B cell (primary cell): ENCODE measurements at regions of chr3 and their contacts with region 1.

Region 1: DNA sequence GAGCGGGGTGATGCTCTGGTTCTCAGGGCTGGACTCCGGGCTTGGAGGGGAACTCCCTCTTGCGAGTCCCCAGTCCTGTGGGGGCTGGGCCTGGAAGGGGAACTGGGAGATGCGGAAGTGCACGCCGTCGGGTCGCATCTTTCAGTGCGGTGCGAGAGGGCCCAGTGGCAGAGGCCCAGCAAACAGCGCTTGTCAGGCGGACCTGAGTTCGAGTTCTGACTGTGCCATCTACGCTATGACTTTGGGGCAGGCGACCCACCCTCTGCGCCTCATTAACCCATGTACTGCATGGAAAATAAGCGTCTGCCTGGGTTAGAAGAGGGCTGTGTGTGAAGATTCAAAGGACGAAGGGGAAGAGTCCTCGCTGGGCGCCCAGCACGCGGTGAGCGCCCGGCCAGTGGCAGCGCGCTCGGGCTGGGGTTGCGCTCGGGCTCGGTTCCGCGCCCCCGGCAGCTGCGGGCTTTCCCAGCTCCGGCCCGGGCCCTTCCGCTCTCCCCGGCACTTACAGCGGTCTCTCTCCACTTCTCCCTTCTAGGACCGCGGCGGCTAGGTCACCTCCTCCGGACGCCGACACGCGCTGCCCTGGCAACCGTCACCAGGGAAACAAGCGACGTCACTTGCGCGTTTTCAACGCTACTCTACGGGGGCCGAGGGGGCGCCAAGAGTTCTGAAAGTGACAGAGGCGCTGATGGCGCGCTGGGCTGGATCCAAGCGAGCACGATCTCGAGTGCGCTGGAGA is at the start of gene CCDC13:
- DNase-seq: peak; percentile 98
- ATAC-seq: peak; percentile 88
- H3K4me3 ChIP-seq: peak within 1 kb of the TSS; percentile 46 to 87 (median 62)
- H3K4me3 Mint-ChIP-seq: peak within 1 kb of the TSS; percentile 90
- H3K27ac ChIP-seq: peak within 1 kb of the TSS; percentile 66 to 81
- H3K27ac Mint-ChIP-seq: peak within 1 kb of the TSS; percentile 92
- H3K4me1 ChIP-seq: peaks cover 4 to 10% of the 10 kb centered on the region in 2 donors
- H3K4me1 Mint-ChIP-seq: peaks cover 11% of the 10 kb centered on the region
- H3K27me3 ChIP-seq: no peaks in the 10 kb centered on the region
- H3K27me3 Mint-ChIP-seq: no peaks in the 10 kb centered on the region
- CTCF ChIP-seq: no peak
- total RNA-seq, gene CCDC13: 1.9 and 2.5 TPM in 2 replicates

Region 2: GRCh38 chr3:42654331-42655201 is 118.3 kb before region 1 on chr3:
- CTCF ChIA-PET with region 1: no interaction called
- POLR2A ChIA-PET with region 1: no interaction called
- intact Hi-C with region 1: loop called (anchors 1 kb)
- DNase-seq: no peak
- ATAC-seq: peak; percentile 55
- H3K4me3 ChIP-seq: peak overlapping the region in 4 of 5 experiments; percentile 28 to 56 (median 50)
- H3K4me3 Mint-ChIP-seq: peak overlapping the region; percentile 86
- H3K27ac ChIP-seq: no peak overlapping the region
- H3K27ac Mint-ChIP-seq: no peak overlapping the region
- H3K4me1 ChIP-seq: peaks cover 25 to 30% of the 10 kb centered on the region in 2 donors
- H3K4me1 Mint-ChIP-seq: peaks cover 21% of the 10 kb centered on the region
- H3K27me3 ChIP-seq: peaks cover 0 to 21% (median 1%) of the 10 kb centered on the region in 4 experiments
- H3K27me3 Mint-ChIP-seq: peaks cover 7% of the 10 kb centered on the region
- CTCF ChIP-seq: no peak

Region 3: DNA sequence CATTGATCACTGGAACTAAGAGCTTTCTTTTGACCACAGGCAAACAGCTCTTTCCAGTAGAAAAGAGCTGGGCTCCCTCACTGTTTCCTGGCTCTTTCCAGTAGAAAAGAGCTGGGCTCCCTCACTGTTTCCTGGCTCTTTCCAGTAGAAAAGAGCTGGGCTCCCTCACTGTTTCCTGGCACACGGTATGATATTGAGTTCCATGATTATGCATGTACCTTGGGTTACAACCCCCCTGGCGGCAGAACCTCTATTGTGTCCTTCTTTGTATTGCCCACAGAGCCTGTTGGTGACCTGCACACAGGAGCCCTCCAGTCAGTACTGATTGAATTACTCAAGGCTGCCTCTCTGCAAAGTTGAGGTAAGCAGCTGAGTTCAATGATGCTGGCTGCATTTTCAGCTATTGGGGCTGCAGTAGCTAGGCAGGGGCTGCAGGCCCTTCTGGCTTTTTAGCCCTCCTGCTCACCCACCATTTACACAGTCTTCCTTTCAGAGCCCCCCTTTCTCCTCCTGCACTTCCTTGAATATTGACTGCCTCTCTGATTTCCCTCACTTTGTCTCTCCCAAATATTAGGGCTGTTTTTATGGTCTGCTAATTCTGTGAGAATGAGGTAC is 46.6 kb after region 1 on chr3:
- CTCF ChIA-PET with region 1: no interaction called
- POLR2A ChIA-PET with region 1: no interaction called
- intact Hi-C with region 1: no loop called
- DNase-seq: no peak
- ATAC-seq: no peak
- H3K4me3 ChIP-seq: no peak overlapping the region
- H3K4me3 Mint-ChIP-seq: no peak overlapping the region
- H3K27ac ChIP-seq: no peak overlapping the region
- H3K27ac Mint-ChIP-seq: no peak overlapping the region
- H3K4me1 ChIP-seq: no peaks in the 10 kb centered on the region
- H3K4me1 Mint-ChIP-seq: no peaks in the 10 kb centered on the region
- H3K27me3 ChIP-seq: no peaks in the 10 kb centered on the region
- H3K27me3 Mint-ChIP-seq: peaks cover 11% of the 10 kb centered on the region
- CTCF ChIP-seq: no peak